ENCODE measurements at regions of chr1 and their contacts with region 1.

Region 1: DNA sequence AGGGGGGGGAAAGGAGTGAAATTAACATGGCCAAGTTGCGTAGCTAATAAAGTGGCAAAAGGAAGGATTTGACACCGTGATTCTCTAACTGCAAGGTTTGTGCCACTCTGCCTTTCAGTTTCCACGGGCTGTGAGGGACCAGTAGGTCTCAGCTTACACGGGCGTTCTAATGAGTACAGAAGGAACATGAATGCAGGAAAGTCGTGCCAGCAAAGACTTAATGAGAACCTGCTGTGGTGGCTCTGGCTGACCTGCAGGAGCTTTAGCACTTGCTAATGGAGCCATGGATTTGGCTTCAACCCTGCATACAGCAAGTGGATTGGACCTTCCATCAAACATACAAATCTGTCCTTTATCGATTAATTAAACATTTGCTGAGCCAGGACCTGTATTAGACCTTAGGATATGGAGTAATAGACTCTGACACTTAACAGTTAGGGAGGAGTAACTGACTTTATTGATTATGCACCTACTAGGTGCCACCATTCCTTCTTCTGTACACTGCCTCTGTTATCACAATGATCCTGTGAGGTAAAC is 15.1 kb upstream of the PITHD1 start:
- DNase-seq: no peak
- ATAC-seq: no peak
- H3K4me3 ChIP-seq: no peak overlapping the region
- H3K4me3 Mint-ChIP-seq: no peak overlapping the region
- H3K27ac ChIP-seq: no peak overlapping the region
- H3K27ac Mint-ChIP-seq: no peak overlapping the region
- H3K4me1 ChIP-seq: no peaks in the 10 kb centered on the region
- H3K4me1 Mint-ChIP-seq: no peaks in the 10 kb centered on the region
- H3K27me3 ChIP-seq: no peaks in the 10 kb centered on the region
- H3K27me3 Mint-ChIP-seq: no peaks in the 10 kb centered on the region
- CTCF ChIP-seq: no peak

Region 2: GRCh38 chr1:23800400-23801337 is 37.6 kb after region 1 on chr1 and contains the start of gene GALE:
- CTCF ChIA-PET with region 1: no interaction called
- POLR2A ChIA-PET with region 1: no interaction called
- intact Hi-C with region 1: no loop called
- DNase-seq: peak; percentile 94 to 99 (median 97)
- ATAC-seq: peak; percentile 90
- H3K4me3 ChIP-seq: peak within 1 kb of the TSS; percentile 81
- H3K4me3 Mint-ChIP-seq: peak within 1 kb of the TSS; percentile 97
- H3K27ac ChIP-seq: peak within 1 kb of the TSS; percentile 78 to 82
- H3K27ac Mint-ChIP-seq: peak within 1 kb of the TSS; percentile 92
- H3K4me1 ChIP-seq: peaks cover 27% of the 10 kb centered on the region
- H3K4me1 Mint-ChIP-seq: peaks cover 14% of the 10 kb centered on the region
- H3K27me3 ChIP-seq: no peaks in the 10 kb centered on the region
- H3K27me3 Mint-ChIP-seq: no peaks in the 10 kb centered on the region
- CTCF ChIP-seq: no peak
- total RNA-seq, gene GALE: 5.4 to 6.9 TPM

Region 3: DNA sequence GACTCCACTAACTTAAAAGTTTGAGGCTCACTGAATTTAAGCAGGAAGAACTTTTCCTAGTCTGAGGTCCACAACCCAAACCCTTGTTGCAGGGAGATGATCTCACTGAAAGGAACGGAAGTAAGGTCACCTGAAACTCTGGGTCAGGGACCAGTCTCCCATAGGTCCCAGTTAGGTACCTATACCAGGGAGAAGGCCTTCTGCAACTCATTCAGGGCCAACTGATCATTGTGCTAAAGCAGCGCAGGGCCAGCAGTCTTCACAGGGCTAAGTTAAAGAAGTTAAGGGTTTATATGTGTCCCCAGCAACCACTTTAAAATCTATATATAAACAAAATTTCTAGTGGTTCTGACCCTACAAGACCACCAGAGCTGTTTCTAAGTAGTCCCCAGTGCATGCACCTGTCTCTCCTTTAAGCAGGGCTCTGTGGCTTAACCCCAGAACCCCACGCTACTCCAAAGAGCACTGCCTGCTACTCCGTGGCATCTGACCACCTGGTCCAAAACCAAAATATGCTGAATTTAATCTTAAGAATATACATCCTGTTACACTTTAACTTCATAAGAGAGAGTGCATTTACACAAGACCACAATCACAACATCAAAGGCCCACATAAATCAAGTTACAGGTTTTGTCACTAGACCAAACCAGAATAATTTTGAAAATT is 214.2 kb after region 1 on chr1:
- CTCF ChIA-PET with region 1: no interaction called
- POLR2A ChIA-PET with region 1: no interaction called
- intact Hi-C with region 1: no loop called
- DNase-seq: peak in 1 of 14 experiments; percentile 27
- ATAC-seq: no peak
- H3K4me3 ChIP-seq: no peak overlapping the region
- H3K4me3 Mint-ChIP-seq: peak overlapping the region; percentile 99
- H3K27ac ChIP-seq: peak overlapping the region in 1 of 2 donors; percentile 51
- H3K27ac Mint-ChIP-seq: peak overlapping the region; percentile 95
- H3K4me1 ChIP-seq: peaks cover 19% of the 10 kb centered on the region
- H3K4me1 Mint-ChIP-seq: peaks cover 64% of the 10 kb centered on the region
- H3K27me3 ChIP-seq: no peaks in the 10 kb centered on the region
- H3K27me3 Mint-ChIP-seq: no peaks in the 10 kb centered on the region
- CTCF ChIP-seq: no peak

Region 4: GRCh38 chr1:25174730-25175612 is 1411.9 kb after region 1 on chr1:
- CTCF ChIA-PET with region 1: no interaction called
- POLR2A ChIA-PET with region 1: no interaction called
- intact Hi-C with region 1: loop called in 1 of 2 experiments (anchors 5 kb)
- DNase-seq: no peak
- ATAC-seq: no peak
- H3K4me3 ChIP-seq: no peak overlapping the region
- H3K4me3 Mint-ChIP-seq: no peak overlapping the region
- H3K27ac ChIP-seq: no peak overlapping the region
- H3K27ac Mint-ChIP-seq: no peak overlapping the region
- H3K4me1 ChIP-seq: no peaks in the 10 kb centered on the region
- H3K4me1 Mint-ChIP-seq: no peaks in the 10 kb centered on the region
- H3K27me3 ChIP-seq: no peaks in the 10 kb centered on the region
- H3K27me3 Mint-ChIP-seq: no peaks in the 10 kb centered on the region
- CTCF ChIP-seq: no peak